CD8-positive, alpha-beta T cell (primary cell): ENCODE measurements at regions of chr13 and their contacts with region 1.

Region 1: GRCh38 chr13:25375727-25376358 is 4.1 kb downstream of the ATP8A2 start:
- DNase-seq: peak in 6 of 9 experiments; percentile 3 to 58 (median 30)
- ATAC-seq: peak; percentile 36
- H3K4me3 ChIP-seq: no peak overlapping the region
- H3K4me3 Mint-ChIP-seq: no peak overlapping the region
- H3K27ac ChIP-seq: no peak overlapping the region
- H3K27ac Mint-ChIP-seq: no peak overlapping the region
- H3K4me1 ChIP-seq: no peaks in the 10 kb centered on the region
- H3K4me1 Mint-ChIP-seq: peaks cover 9% of the 10 kb centered on the region
- H3K27me3 ChIP-seq: peaks cover 5 to 20% of the 10 kb centered on the region in 2 experiments
- H3K27me3 Mint-ChIP-seq: peaks cover 43% of the 10 kb centered on the region
- CTCF ChIP-seq: peak; percentile 67

Region 2: DNA sequence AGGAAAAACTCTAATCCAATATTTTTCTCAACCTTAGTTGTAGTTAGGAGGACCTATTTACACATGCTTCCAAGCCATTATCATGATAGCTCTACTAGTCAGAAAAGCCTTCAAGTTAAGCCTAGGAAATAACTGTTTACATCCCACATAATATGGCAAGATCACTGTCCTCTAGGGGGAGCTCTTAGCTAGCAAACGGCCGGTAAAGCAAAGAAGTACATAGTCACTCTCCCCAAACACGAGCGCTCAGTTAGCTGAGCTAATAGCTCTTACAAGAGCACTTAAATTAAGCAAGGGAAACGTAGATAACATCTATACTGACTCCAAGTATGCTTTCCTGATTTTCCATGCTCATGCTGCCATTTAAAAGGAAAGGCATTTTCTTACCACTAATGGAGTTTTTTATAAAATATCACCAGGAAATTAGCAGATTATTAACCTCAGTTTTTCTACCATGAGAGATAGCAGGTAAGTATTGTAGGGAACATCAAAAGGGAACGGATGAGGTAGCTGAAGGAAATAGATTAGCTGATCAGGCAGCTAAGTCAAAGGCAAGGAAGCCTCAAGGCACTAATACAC is 380.5 kb before region 1 on chr13:
- CTCF ChIA-PET with region 1: no interaction called
- POLR2A ChIA-PET with region 1: no interaction called
- intact Hi-C with region 1: loop called (anchors 1 to 2 kb)
- DNase-seq: peak in 8 of 9 experiments; percentile 28 to 77 (median 60)
- ATAC-seq: peak; percentile 52
- H3K4me3 ChIP-seq: no peak overlapping the region
- H3K4me3 Mint-ChIP-seq: no peak overlapping the region
- H3K27ac ChIP-seq: no peak overlapping the region
- H3K27ac Mint-ChIP-seq: no peak overlapping the region
- H3K4me1 ChIP-seq: no peaks in the 10 kb centered on the region
- H3K4me1 Mint-ChIP-seq: peaks cover 3% of the 10 kb centered on the region
- H3K27me3 ChIP-seq: peaks cover 0 to 2% of the 10 kb centered on the region in 2 experiments
- H3K27me3 Mint-ChIP-seq: peaks cover 31% of the 10 kb centered on the region
- CTCF ChIP-seq: peak; percentile 80

Region 3: GRCh38 chr13:25001476-25002206 is 374.2 kb before region 1 on chr13:
- CTCF ChIA-PET with region 1: no interaction called
- POLR2A ChIA-PET with region 1: no interaction called
- intact Hi-C with region 1: loop called in 1 of 2 experiments (anchors 2 kb)
- DNase-seq: no peak
- ATAC-seq: no peak
- H3K4me3 ChIP-seq: no peak overlapping the region
- H3K4me3 Mint-ChIP-seq: no peak overlapping the region
- H3K27ac ChIP-seq: no peak overlapping the region
- H3K27ac Mint-ChIP-seq: no peak overlapping the region
- H3K4me1 ChIP-seq: no peaks in the 10 kb centered on the region
- H3K4me1 Mint-ChIP-seq: peaks cover 3% of the 10 kb centered on the region
- H3K27me3 ChIP-seq: no peaks in the 10 kb centered on the region
- H3K27me3 Mint-ChIP-seq: peaks cover 44% of the 10 kb centered on the region
- CTCF ChIP-seq: no peak

Region 4: GRCh38 chr13:25084096-25084495 is 291.7 kb before region 1 on chr13:
- CTCF ChIA-PET with region 1: no interaction called
- POLR2A ChIA-PET with region 1: no interaction called
- intact Hi-C with region 1: no loop called
- DNase-seq: no peak
- ATAC-seq: no peak
- H3K4me3 ChIP-seq: no peak overlapping the region
- H3K4me3 Mint-ChIP-seq: no peak overlapping the region
- H3K27ac ChIP-seq: no peak overlapping the region
- H3K27ac Mint-ChIP-seq: no peak overlapping the region
- H3K4me1 ChIP-seq: no peaks in the 10 kb centered on the region
- H3K4me1 Mint-ChIP-seq: no peaks in the 10 kb centered on the region
- H3K27me3 ChIP-seq: no peaks in the 10 kb centered on the region
- H3K27me3 Mint-ChIP-seq: peaks cover 2% of the 10 kb centered on the region
- CTCF ChIP-seq: no peak

Region 5: DNA sequence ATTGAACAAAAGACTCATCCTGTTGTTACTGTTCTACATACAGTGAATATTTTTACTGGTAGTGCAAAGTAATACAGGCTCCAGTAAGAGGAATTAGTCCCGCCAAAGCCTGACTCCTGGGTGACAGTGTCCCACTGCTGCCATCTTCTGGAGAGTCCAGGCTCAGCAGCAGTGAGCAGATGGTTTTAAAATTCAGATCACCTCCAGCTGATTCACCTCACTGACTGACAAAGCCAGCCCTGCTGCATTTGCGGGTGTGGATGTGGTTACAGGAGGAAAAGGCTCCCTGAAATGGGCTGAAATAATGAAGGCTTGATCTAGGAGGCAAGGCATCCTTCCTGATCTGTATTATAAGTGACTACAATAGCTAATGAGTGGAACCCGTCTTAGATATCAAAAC is 261.6 kb before region 1 on chr13:
- CTCF ChIA-PET with region 1: no interaction called
- POLR2A ChIA-PET with region 1: no interaction called
- intact Hi-C with region 1: loop called in 1 of 2 experiments (anchors 10 kb)
- DNase-seq: peak in 8 of 9 experiments; percentile 25 to 58 (median 46)
- ATAC-seq: no peak
- H3K4me3 ChIP-seq: no peak overlapping the region
- H3K4me3 Mint-ChIP-seq: no peak overlapping the region
- H3K27ac ChIP-seq: no peak overlapping the region
- H3K27ac Mint-ChIP-seq: no peak overlapping the region
- H3K4me1 ChIP-seq: peaks cover 4% of the 10 kb centered on the region
- H3K4me1 Mint-ChIP-seq: no peaks in the 10 kb centered on the region
- H3K27me3 ChIP-seq: peaks cover 0 to 4% of the 10 kb centered on the region in 2 experiments
- H3K27me3 Mint-ChIP-seq: peaks cover 26% of the 10 kb centered on the region
- CTCF ChIP-seq: peak; percentile 62

Region 6: DNA sequence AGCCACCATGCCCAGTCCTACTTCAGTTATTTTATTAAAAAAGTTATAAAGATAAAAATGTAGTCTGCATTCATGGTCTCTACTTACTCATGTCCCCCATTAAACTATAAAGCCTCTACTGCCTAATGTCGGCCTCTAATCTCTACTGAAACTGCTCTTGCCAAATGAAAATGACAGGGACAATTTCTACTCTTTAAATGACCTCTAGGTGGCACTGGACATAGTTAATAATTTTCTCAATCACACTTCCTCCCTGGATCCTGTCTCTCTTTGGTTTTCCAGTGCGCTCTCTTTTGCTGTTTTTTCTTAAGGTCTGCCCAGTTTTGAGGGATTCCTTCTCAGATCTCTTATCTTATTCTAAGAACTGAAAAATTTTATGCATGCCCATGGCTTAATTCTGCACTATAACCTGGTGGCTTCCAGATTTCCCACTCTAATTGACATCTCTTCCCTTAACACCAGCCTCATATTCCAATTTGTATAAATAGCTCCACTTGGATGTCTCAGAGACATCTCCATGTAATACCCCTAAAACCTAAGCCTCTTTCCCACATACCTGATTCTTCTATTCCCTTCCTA is 142.8 kb before region 1 on chr13:
- CTCF ChIA-PET with region 1: interaction called, 9 read pairs
- POLR2A ChIA-PET with region 1: no interaction called
- intact Hi-C with region 1: loop called (anchors 1 kb)
- DNase-seq: peak in 2 of 9 experiments; percentile 29 to 41
- ATAC-seq: no peak
- H3K4me3 ChIP-seq: no peak overlapping the region
- H3K4me3 Mint-ChIP-seq: no peak overlapping the region
- H3K27ac ChIP-seq: no peak overlapping the region
- H3K27ac Mint-ChIP-seq: no peak overlapping the region
- H3K4me1 ChIP-seq: no peaks in the 10 kb centered on the region
- H3K4me1 Mint-ChIP-seq: peaks cover 3% of the 10 kb centered on the region
- H3K27me3 ChIP-seq: no peaks in the 10 kb centered on the region
- H3K27me3 Mint-ChIP-seq: peaks cover 14% of the 10 kb centered on the region
- CTCF ChIP-seq: peak; percentile 49

Region 7: GRCh38 chr13:25420161-25420560 is 44.3 kb after region 1 on chr13:
- CTCF ChIA-PET with region 1: no interaction called
- POLR2A ChIA-PET with region 1: no interaction called
- intact Hi-C with region 1: no loop called
- DNase-seq: no peak
- ATAC-seq: no peak
- H3K4me3 ChIP-seq: no peak overlapping the region
- H3K4me3 Mint-ChIP-seq: no peak overlapping the region
- H3K27ac ChIP-seq: no peak overlapping the region
- H3K27ac Mint-ChIP-seq: no peak overlapping the region
- H3K4me1 ChIP-seq: no peaks in the 10 kb centered on the region
- H3K4me1 Mint-ChIP-seq: no peaks in the 10 kb centered on the region
- H3K27me3 ChIP-seq: no peaks in the 10 kb centered on the region
- H3K27me3 Mint-ChIP-seq: peaks cover 28% of the 10 kb centered on the region
- CTCF ChIP-seq: no peak